GM12878 (cell line): ENCODE measurements at regions of chr10 and their contacts with region 1.

Region 1: GRCh38 chr10:11270135-11270857 is 252.6 kb downstream of the CELF2 start:
- DNase-seq: peak; percentile 60
- ATAC-seq: peak; percentile 97
- H3K4me3 ChIP-seq: peak overlapping the region; percentile 20; the same call in 1 of the 2 replicates
- H3K27ac ChIP-seq: peak overlapping the region; percentile 76
- H3K4me1 ChIP-seq: peaks cover 52% of the 10 kb centered on the region
- H3K27me3 ChIP-seq: no peaks in the 10 kb centered on the region
- CTCF ChIP-seq: peak; percentile 98 to 99 (median 99); a peak in 5 of 6 replicates
- EP300 ChIP-seq: no peak
- POLR2A ChIP-seq: peak; percentile 76
- RAD21 ChIP-seq: peak; percentile 98

Region 2: GRCh38 chr10:9608602-9609001 is 1661.7 kb before region 1 on chr10:
- CTCF ChIA-PET with region 1: no interaction called
- POLR2A ChIA-PET with region 1: no interaction called
- RAD21 ChIA-PET with region 1: no interaction called
- SMC1A ChIA-PET with region 1: no interaction called
- in situ Hi-C with region 1: loop called (anchors 25 kb)
- intact Hi-C with region 1: no loop called
- DNase-seq: no peak
- ATAC-seq: no peak
- H3K4me3 ChIP-seq: no peak overlapping the region
- H3K27ac ChIP-seq: no peak overlapping the region
- H3K4me1 ChIP-seq: no peaks in the 10 kb centered on the region
- H3K27me3 ChIP-seq: no peaks in the 10 kb centered on the region
- CTCF ChIP-seq: no peak; a peak in 1 of 6 replicates
- EP300 ChIP-seq: no peak
- POLR2A ChIP-seq: no peak
- RAD21 ChIP-seq: peak; percentile 51; the same call in 1 of the 2 replicates

Region 3: GRCh38 chr10:11106621-11107374 is 163.5 kb before region 1 on chr10:
- CTCF ChIA-PET with region 1: interaction called, 90 read pairs
- POLR2A ChIA-PET with region 1: no interaction called
- RAD21 ChIA-PET with region 1: interaction called, 46 read pairs
- SMC1A ChIA-PET with region 1: interaction called, 56 read pairs
- in situ Hi-C with region 1: no loop called
- intact Hi-C with region 1: no loop called
- DNase-seq: peak; percentile 42
- ATAC-seq: peak; percentile 88
- H3K4me3 ChIP-seq: no peak overlapping the region
- H3K27ac ChIP-seq: no peak overlapping the region
- H3K4me1 ChIP-seq: peaks cover 18% of the 10 kb centered on the region
- H3K27me3 ChIP-seq: no peaks in the 10 kb centered on the region
- CTCF ChIP-seq: no peak
- EP300 ChIP-seq: no peak
- POLR2A ChIP-seq: no peak
- RAD21 ChIP-seq: no peak

Region 4: DNA sequence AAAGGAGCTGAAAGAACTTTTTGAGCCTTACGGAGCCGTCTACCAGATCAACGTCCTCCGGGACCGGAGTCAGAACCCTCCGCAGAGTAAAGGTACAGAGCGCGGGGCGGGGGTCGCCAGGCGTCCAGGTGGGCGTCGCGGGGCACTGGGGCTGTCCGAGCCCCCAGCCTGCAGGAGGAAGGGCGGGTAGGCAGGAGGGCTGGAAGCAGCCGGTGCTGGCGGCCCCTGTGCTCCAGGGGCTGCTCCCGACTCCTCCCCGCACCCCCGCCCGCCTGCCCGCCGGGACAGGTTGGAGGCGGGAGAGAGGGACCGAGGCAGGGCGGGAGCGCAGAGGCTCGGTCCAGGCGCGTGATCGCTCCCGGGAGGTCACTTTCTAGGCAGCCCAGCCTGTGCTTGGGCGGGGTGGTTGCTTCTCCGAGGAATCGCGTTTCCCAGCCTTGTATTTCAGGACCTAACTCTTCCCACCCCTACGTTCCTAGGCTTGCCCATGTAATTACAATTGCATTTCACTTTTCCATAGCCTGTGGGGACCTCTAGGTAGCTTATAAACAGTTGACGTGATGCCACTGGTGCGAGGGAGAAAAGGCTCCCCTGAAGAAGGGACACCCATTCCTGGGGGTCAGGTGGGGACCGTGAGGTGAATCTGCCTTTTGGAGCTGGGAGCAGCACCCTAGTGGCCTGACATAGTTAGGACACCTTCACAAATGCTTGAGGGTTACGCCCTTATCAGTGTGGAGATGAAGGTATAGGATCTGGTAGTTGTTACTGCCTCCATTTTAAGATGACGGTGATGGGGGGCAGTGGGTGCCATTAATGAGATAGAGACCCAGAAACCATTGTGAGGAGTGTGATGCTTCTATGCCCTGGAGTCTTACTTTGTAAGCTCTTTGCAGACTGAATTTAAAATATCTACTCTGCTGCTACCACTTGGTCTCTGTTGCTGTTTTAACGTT is 104.4 kb before region 1 on chr10:
- CTCF ChIA-PET with region 1: interaction called, 114 read pairs
- POLR2A ChIA-PET with region 1: interaction called, 4 read pairs
- RAD21 ChIA-PET with region 1: interaction called, 40 read pairs
- SMC1A ChIA-PET with region 1: interaction called, 87 read pairs
- in situ Hi-C with region 1: no loop called
- intact Hi-C with region 1: no loop called
- DNase-seq: no peak
- ATAC-seq: peak; percentile 69
- H3K4me3 ChIP-seq: peak overlapping the region; percentile 96
- H3K27ac ChIP-seq: peak overlapping the region; percentile 95
- H3K4me1 ChIP-seq: peaks cover 21% of the 10 kb centered on the region
- H3K27me3 ChIP-seq: no peaks in the 10 kb centered on the region
- CTCF ChIP-seq: peak; percentile 66 to 89 (median 72)
- EP300 ChIP-seq: no peak
- POLR2A ChIP-seq: peak; percentile 54; the same call in 1 of the 2 replicates
- RAD21 ChIP-seq: peak; percentile 68

Region 5: DNA sequence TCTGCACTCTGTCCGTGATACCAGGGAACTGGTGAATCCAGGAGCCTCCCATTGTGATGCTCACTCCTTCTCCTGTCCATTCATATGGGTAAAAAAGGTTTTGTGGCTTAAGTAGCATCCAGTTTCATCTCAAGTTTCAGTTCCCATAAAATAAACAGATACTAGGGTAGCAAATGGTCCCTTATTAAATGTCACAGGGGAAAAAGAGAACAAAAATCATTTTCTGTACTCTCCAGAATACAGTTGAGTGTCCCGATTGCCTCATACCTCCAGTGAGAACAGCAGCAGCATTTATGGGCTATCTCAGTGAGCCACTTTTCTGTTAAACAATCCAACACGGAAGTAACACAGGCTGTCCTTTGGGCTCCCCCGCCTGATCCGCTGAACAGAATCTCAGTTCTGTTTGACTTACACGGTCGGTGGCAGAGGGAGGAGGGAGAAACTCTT is 73.0 kb before region 1 on chr10:
- CTCF ChIA-PET with region 1: interaction called, 10 read pairs
- POLR2A ChIA-PET with region 1: no interaction called
- RAD21 ChIA-PET with region 1: interaction called, 7 read pairs
- SMC1A ChIA-PET with region 1: interaction called, 7 read pairs
- in situ Hi-C with region 1: no loop called
- intact Hi-C with region 1: loop called (anchors 2 kb)
- DNase-seq: peak; percentile 79
- ATAC-seq: peak; percentile 85
- H3K4me3 ChIP-seq: no peak overlapping the region
- H3K27ac ChIP-seq: peak overlapping the region; percentile 63
- H3K4me1 ChIP-seq: peaks cover 84% of the 10 kb centered on the region
- H3K27me3 ChIP-seq: no peaks in the 10 kb centered on the region
- CTCF ChIP-seq: no peak
- EP300 ChIP-seq: peak; percentile 64 to 87
- POLR2A ChIP-seq: peak; percentile 61; the same call in 1 of the 2 replicates
- RAD21 ChIP-seq: no peak

Region 6: GRCh38 chr10:11236234-11236633 is 34.1 kb before region 1 on chr10:
- CTCF ChIA-PET with region 1: interaction called, 44 read pairs
- POLR2A ChIA-PET with region 1: no interaction called
- RAD21 ChIA-PET with region 1: interaction called, 30 read pairs
- SMC1A ChIA-PET with region 1: interaction called, 97 read pairs
- in situ Hi-C with region 1: no loop called
- intact Hi-C with region 1: no loop called
- DNase-seq: no peak
- ATAC-seq: peak; percentile 69
- H3K4me3 ChIP-seq: peak overlapping the region; percentile 36; the same call in 1 of the 2 replicates
- H3K27ac ChIP-seq: peak overlapping the region; percentile 74
- H3K4me1 ChIP-seq: peaks cover 71% of the 10 kb centered on the region
- H3K27me3 ChIP-seq: no peaks in the 10 kb centered on the region
- CTCF ChIP-seq: 0 out of 6 replicates have a peak, but pooled peaks of 1 of the 3 experiments have one; percentile 2
- EP300 ChIP-seq: peak in 1 of 2 experiments; percentile 63; a peak in 1 of 4 replicates
- POLR2A ChIP-seq: no peak
- RAD21 ChIP-seq: no peak

Region 7: DNA sequence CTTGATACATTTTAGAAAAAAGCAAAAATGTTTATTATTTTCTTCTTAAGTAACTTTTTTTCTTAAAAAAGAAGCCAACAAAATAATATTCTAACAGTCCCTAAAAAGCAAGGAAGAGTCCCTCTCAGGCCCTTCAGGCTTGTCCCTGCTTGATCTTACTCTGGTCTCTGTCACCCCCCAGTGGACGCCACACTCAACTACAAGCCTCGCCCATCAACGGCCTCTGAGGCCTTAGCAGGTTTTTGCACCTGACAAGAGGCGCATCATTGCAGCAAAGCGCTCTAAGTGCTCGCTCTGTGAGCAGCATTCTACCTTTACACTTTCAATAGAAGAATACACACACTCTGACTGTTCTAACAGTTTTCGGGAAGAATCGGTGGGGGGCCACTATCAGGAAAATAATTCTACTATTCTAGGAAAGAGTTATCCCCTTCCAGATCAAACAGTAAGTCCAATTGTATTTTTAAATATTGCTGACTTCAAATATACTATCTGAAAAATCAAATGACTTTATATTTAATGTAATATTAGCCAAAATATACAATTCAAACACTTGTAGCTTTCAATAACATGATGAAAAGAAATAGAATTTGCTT is 202.0 kb after region 1 on chr10:
- CTCF ChIA-PET with region 1: no interaction called
- POLR2A ChIA-PET with region 1: no interaction called
- RAD21 ChIA-PET with region 1: no interaction called
- SMC1A ChIA-PET with region 1: no interaction called
- in situ Hi-C with region 1: no loop called
- intact Hi-C with region 1: loop called (anchors 5 kb)
- DNase-seq: no peak
- ATAC-seq: peak; percentile 99
- H3K4me3 ChIP-seq: no peak overlapping the region
- H3K27ac ChIP-seq: no peak overlapping the region
- H3K4me1 ChIP-seq: no peaks in the 10 kb centered on the region
- H3K27me3 ChIP-seq: no peaks in the 10 kb centered on the region
- CTCF ChIP-seq: peak; percentile 88 to 91 (median 90)
- EP300 ChIP-seq: no peak
- POLR2A ChIP-seq: no peak
- RAD21 ChIP-seq: peak; percentile 96